ENCODE measurements at regions of chr18 and their contacts with region 1.

Region 1: DNA sequence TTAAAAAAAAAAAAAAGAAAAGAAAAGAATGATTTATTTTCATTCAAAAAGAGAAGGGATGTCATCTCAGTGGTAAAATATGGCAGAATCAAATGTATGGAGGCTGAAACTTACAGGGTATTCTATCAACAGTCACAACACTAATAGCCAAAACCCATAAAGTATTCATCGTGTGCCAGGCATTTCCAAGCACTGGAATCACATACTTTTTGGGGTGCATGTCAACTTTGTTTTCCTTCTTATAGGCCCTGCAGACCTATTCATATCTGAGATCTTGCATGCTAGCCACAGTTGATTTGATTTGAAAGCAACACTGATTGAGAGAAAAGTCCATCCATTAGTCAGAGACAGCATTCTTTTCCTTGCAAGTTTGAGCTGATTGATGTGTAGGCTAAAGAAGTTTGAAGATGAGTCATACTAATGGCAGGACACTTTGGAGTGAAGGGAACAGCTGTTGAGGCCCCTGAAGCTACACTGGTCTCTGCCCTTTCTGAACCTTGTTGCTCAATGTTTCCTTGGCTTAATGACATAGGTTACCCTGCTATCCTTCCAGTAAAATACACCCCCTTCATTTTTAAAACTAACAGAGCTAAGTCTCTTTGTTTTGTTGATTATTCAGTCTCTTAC is 22.0 kb downstream of the KATNAL2 start:
- DNase-seq: peak; percentile 66
- ATAC-seq: peak; percentile 93
- H3K4me3 ChIP-seq: no peak overlapping the region
- H3K27ac ChIP-seq: no peak overlapping the region
- H3K4me1 ChIP-seq: no peaks in the 10 kb centered on the region; the same call in 1 of the 2 replicates
- H3K27me3 ChIP-seq: no peaks in the 10 kb centered on the region
- CTCF ChIP-seq: no peak
- POLR2A ChIP-seq: no peak
- RAD21 ChIP-seq: no peak

Region 2: GRCh38 chr18:46917108-46917802 is 22.2 kb before region 1 on chr18 and contains the starts of genes KATNAL2 and PIAS2:
- CTCF ChIA-PET with region 1: no interaction called
- POLR2A ChIA-PET with region 1: no interaction called
- dilution Hi-C with region 1: no loop called
- in situ Hi-C with region 1: no loop called
- intact Hi-C with region 1: loop called (anchors 1 kb)
- DNase-seq: peak; percentile 58
- ATAC-seq: peak; percentile 94
- H3K4me3 ChIP-seq: peak within 1 kb of the TSS; percentile 85
- H3K27ac ChIP-seq: peak within 1 kb of the TSS; percentile 85
- H3K4me1 ChIP-seq: peaks cover 2% of the 10 kb centered on the region; the same call in 1 of the 2 replicates
- H3K27me3 ChIP-seq: no peaks in the 10 kb centered on the region
- CTCF ChIP-seq: no peak
- POLR2A ChIP-seq: peak; percentile 79
- RAD21 ChIP-seq: no peak
- total RNA-seq, gene KATNAL2: 0.90 and 1.4 TPM in 2 replicates
- total RNA-seq, gene PIAS2: 25.3 and 28.9 TPM in 2 replicates

Measured in IMR-90 (cell line).